ENCODE measurements at regions of chr7 and their contacts with region 1.

Region 1: DNA sequence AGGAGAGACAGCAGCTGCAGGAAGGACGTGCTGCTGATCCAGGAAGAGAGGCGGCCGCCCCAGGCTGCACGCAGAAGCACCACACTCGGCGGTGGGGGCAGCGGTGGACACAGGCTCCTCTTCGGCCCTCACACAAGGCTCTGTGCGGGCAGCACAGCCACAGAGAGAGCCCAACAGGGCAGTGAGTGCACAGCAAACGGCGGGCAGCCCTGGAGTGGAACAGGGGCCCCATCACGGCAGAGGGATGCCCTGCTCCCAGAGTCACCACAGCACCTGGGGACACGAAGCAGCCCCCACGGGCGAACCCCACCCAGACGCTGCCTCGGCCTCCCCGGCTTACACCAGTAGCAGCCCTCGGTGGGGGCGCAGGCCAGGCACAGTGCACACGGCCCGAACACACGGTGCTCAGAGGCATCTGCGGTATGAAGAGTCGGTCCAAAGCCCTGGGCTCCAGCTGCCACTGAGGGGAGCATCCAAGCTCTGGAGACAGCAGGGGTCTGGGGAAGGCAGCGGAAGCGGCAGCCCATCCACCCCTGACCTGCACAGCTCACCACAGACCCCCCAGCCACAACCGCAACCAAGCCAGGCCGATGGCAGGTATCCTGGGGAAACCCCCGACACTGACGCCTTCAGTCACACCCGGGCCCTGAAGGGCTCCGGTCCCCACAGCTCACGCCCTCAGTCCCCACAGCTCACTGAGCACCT is 16.8 kb downstream of the NUDT1 start:
- DNase-seq: peak in 2 of 3 donors; percentile 20 to 41
- ATAC-seq: no peak
- H3K4me3 ChIP-seq: no peak overlapping the region
- H3K27ac ChIP-seq: no peak overlapping the region
- H3K4me1 ChIP-seq: no peaks in the 10 kb centered on the region
- H3K27me3 ChIP-seq: no peaks in the 10 kb centered on the region

Region 2: DNA sequence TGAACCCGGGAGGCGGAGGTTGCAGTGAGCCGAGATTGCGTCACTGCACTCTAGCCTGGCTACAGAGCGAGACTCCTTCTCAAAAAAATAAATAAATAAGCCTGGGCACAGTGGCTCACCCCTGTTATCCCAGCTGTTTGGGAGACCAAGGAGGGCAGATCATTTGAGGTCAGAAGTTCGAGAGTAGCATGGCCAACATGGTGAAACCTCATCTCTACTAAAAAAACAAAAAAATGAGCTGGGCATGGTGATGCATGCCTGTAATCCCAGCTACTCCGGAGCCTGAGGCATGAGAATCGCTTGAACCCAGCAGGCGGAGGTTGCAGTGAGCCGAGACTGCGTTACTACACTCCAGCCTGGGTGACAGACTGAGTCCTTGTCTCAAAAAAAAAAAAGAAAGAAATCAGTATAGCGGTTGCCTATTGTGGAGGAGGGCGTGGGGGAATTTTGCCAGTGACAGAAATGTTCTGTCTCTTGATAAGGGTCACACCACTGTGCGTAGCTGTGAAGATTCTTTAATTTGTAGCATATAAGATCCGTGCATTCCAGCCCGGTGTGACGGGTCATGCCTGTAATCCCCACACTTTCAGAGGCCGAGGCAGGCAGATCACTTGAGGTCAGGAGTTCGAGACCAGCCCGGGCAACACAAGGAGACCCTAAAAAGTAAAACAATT is 78.0 kb after region 1 on chr7:
- intact Hi-C with region 1: loop called in 1 of 4 experiments (anchors 10 kb)
- DNase-seq: no peak
- ATAC-seq: no peak
- H3K4me3 ChIP-seq: no peak overlapping the region
- H3K27ac ChIP-seq: no peak overlapping the region
- H3K4me1 ChIP-seq: no peaks in the 10 kb centered on the region
- H3K27me3 ChIP-seq: no peaks in the 10 kb centered on the region

Region 3: DNA sequence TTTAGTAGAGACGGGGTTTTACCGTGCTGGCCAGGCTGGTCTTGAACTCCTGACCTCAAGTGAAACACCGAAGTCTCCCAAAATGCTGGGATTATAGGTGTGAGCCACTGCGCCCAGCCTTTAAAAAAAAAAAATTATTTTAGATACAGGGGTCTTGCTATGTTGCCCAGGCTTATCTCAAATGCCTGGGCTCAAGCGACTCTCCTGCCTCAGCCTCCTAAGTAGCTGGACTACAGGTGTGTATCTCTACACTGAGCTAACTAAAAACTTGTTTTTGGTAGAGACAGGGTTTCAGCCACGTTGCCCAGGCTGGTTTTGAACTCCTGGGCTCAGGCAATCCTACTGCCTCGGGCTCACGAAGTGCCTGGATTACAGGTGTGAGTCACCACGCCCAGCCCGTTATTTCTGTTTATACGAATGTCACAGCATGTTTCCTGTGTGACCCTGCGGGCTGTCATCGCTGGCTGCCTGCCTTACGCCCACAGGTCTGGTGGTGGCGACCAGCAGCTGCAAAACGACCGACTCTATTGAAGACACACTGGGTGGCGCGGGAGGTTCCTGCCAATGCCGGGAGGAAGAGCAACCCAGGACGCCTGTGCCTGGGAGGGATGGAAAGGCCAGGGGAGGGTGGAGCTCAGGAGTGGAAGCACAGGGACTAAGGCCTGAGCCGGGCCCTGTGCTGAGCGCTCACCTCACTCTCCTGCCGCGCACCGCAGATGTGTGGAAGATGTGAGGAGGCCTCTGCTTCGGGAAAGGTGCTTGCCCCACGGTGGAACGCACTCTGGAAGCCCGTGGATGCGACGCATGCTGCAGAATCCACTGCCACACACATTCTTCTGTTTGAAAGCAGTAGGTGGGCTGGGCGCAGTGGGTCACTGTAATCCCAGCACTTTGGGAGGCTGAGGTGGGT is 462.0 kb after region 1 on chr7:
- intact Hi-C with region 1: no loop called
- DNase-seq: peak in 2 of 3 donors; percentile 50 to 68
- ATAC-seq: no peak
- H3K4me3 ChIP-seq: no peak overlapping the region
- H3K27ac ChIP-seq: no peak overlapping the region
- H3K4me1 ChIP-seq: peaks cover 2% of the 10 kb centered on the region
- H3K27me3 ChIP-seq: no peaks in the 10 kb centered on the region

Measured in right cardiac atrium (tissue), 5 donors.